Panc1 (cell line): ENCODE measurements at regions of chr2 and their contacts with region 1.

Region 1: GRCh38 chr2:171460537-171460936 is 26.5 kb downstream of the DCAF17 start:
- DNase-seq: no peak
- ATAC-seq: no peak
- H3K4me3 ChIP-seq: no peak overlapping the region
- H3K27ac ChIP-seq: no peak overlapping the region
- H3K4me1 ChIP-seq: no peaks in the 10 kb centered on the region
- H3K27me3 ChIP-seq: no peaks in the 10 kb centered on the region
- CTCF ChIP-seq: no peak

Region 2: DNA sequence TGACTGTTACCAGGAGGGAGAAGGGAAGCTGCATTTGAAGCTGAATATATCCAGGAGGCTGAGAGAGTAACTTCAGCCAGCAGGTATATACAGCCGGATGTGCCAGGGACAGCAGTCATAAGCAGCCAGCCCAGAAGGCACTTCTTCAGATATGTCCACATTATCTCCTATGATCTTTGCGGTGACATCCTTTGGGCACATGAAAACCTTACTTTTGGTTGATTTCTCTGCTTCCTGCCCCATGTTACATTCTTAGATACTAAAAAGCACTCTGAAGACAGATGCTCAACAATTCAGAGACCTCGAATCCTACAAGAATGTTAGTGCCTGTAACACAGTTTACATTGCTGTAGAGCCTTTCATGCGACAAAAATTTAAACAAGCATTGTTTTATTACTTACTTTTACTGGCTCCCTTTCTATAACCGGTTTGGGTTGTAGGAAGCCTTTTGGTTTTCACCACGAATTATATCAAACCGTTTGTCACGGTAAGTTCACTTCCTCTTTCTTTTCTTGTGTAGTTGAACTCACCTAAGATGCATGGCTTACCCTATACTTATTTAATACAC is 249.6 kb before region 1 on chr2:
- CTCF ChIA-PET with region 1: no interaction called
- POLR2A ChIA-PET with region 1: no interaction called
- in situ Hi-C with region 1: no loop called
- intact Hi-C with region 1: no loop called
- DNase-seq: no peak
- ATAC-seq: peak; percentile 78
- H3K4me3 ChIP-seq: no peak overlapping the region
- H3K27ac ChIP-seq: no peak overlapping the region
- H3K4me1 ChIP-seq: peaks cover 4% of the 10 kb centered on the region; the same call in 1 of the 2 replicates
- H3K27me3 ChIP-seq: no peaks in the 10 kb centered on the region
- CTCF ChIP-seq: no peak

Region 3: GRCh38 chr2:171531291-171531690 is 70.8 kb after region 1 on chr2:
- CTCF ChIA-PET with region 1: interaction called, 10 read pairs
- POLR2A ChIA-PET with region 1: no interaction called
- in situ Hi-C with region 1: no loop called
- intact Hi-C with region 1: no loop called
- DNase-seq: no peak
- ATAC-seq: no peak
- H3K4me3 ChIP-seq: no peak overlapping the region
- H3K27ac ChIP-seq: no peak overlapping the region
- H3K4me1 ChIP-seq: no peaks in the 10 kb centered on the region
- H3K27me3 ChIP-seq: peaks cover 44% of the 10 kb centered on the region
- CTCF ChIP-seq: no peak

Region 4: DNA sequence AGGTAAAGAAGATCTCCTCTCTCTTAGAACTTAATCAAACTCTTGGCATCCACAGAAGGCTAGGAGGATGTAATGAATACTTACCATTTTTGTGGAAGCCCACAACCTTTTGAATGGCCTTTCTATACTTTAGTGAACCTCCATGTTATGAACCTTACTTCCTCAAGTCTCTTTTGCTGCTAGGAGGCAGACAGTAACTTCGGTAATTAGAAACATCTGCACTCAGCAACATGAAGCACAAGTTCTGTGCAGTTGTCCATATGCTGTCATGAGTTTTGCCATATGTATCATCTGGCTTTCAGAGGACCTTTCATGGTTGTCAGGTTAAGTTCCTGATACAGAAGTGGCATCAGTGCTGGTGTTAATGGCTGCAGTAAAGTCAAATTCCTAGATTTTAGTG is 1145.7 kb after region 1 on chr2:
- CTCF ChIA-PET with region 1: no interaction called
- POLR2A ChIA-PET with region 1: no interaction called
- in situ Hi-C with region 1: no loop called
- intact Hi-C with region 1: no loop called
- DNase-seq: no peak
- ATAC-seq: no peak
- H3K4me3 ChIP-seq: no peak overlapping the region
- H3K27ac ChIP-seq: no peak overlapping the region
- H3K4me1 ChIP-seq: no peaks in the 10 kb centered on the region
- H3K27me3 ChIP-seq: no peaks in the 10 kb centered on the region
- CTCF ChIP-seq: no peak